Sigmoid colon (tissue), 7 donors: ENCODE measurements at regions of chr9 and their contacts with region 1.

Region 1: DNA sequence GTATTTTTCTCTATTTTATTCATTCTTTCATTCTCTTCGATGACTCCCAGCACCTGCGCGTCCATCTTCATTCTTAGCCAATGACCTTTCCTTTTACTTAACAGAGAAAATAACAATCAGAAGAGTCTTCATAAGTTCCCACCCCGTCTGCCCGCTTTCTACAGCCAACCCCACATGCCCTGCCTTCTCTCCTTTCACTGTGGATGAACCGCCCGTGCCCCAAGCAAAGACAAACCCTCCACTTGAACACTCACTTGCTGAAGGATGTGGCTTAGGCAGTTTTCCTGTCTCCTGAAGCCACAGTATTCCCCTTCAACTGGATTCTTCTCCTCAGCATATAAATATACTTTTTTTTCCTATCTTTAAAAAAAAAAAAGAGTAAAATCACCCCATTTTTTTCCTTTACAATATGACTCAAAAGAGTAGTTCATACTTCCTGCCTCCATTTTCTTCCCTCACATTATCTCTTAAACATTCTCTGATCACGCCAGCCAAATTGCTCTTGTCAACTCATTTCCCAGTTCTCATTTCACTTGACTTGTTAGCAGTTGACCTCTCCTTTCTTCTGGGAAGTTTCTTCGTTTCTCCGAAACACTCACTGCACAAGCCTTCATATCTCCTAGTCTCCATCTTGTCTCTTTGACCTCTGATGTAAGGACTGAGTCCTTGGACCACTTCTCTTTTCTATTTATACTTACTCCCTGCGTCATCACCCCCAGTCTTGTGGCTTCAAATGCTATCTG is 11.1 kb downstream of the NIPSNAP3B start:
- DNase-seq: no peak
- H3K4me3 ChIP-seq: no peak overlapping the region
- H3K27ac ChIP-seq: peak overlapping the region in 2 of 4 donors; percentile 7 to 35
- H3K4me1 ChIP-seq: peaks cover 0 to 12% (median 8%) of the 10 kb centered on the region in 4 donors
- H3K27me3 ChIP-seq: no peaks in the 10 kb centered on the region
- CTCF ChIP-seq: no peak
- EP300 ChIP-seq: no peak
- POLR2A ChIP-seq: no peak

Region 2: GRCh38 chr9:104564358-104564757 is 210.6 kb before region 1 on chr9:
- intact Hi-C with region 1: no loop called
- DNase-seq: no peak
- H3K4me3 ChIP-seq: no peak overlapping the region
- H3K27ac ChIP-seq: no peak overlapping the region
- H3K4me1 ChIP-seq: no peaks in the 10 kb centered on the region
- H3K27me3 ChIP-seq: no peaks in the 10 kb centered on the region
- CTCF ChIP-seq: no peak
- EP300 ChIP-seq: no peak
- POLR2A ChIP-seq: no peak

Region 3: DNA sequence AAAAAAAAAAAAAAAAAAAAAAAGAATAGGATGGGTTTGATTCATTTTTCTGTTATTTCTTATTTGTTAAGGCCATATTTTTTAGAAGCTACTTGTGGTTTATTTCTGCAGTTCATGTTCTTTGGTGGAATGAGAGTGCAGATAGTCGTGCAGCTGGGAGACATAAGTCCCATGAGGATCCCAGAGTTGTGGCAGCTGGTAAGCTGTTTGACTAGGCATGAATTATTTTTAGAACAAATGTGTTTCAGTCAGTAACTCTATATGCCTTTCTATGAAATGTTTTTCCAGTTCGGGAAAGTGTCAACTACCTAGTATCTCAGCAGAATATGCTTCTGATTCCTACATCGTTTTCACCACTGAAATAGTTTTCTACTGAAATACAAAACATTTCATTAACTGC is 16.0 kb before region 1 on chr9:
- intact Hi-C with region 1: no loop called
- DNase-seq: no peak
- H3K4me3 ChIP-seq: no peak overlapping the region
- H3K27ac ChIP-seq: no peak overlapping the region
- H3K4me1 ChIP-seq: no peaks in the 10 kb centered on the region
- H3K27me3 ChIP-seq: no peaks in the 10 kb centered on the region
- CTCF ChIP-seq: no peak
- EP300 ChIP-seq: no peak
- POLR2A ChIP-seq: no peak

Region 4: DNA sequence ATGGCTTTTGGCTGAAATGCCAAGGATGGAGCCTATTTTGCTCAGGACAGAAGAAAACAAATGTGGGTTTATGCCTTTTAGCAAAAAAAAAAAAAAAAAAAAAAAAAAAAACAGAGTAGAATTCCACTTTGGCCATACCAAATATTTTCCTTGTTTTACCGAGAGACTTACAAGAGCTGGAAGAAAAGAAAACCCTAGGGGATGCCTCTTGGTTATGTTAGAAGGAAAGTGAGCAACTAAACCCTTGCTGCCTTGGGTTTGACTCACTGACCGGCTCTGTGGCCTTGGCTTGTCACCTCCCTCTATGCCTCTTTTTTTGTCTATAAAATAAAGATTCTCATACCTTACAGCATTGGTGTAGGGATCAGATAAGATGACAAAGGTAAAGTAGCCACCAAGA is 222.5 kb after region 1 on chr9:
- intact Hi-C with region 1: loop called (anchors 5 kb)
- DNase-seq: no peak
- H3K4me3 ChIP-seq: no peak overlapping the region
- H3K27ac ChIP-seq: no peak overlapping the region
- H3K4me1 ChIP-seq: peaks cover 0 to 21% (median 19%) of the 10 kb centered on the region in 4 donors
- H3K27me3 ChIP-seq: no peaks in the 10 kb centered on the region
- CTCF ChIP-seq: no peak
- EP300 ChIP-seq: no peak
- POLR2A ChIP-seq: no peak